ENCODE measurements at regions of chr1 and their contacts with region 1.

Region 1: DNA sequence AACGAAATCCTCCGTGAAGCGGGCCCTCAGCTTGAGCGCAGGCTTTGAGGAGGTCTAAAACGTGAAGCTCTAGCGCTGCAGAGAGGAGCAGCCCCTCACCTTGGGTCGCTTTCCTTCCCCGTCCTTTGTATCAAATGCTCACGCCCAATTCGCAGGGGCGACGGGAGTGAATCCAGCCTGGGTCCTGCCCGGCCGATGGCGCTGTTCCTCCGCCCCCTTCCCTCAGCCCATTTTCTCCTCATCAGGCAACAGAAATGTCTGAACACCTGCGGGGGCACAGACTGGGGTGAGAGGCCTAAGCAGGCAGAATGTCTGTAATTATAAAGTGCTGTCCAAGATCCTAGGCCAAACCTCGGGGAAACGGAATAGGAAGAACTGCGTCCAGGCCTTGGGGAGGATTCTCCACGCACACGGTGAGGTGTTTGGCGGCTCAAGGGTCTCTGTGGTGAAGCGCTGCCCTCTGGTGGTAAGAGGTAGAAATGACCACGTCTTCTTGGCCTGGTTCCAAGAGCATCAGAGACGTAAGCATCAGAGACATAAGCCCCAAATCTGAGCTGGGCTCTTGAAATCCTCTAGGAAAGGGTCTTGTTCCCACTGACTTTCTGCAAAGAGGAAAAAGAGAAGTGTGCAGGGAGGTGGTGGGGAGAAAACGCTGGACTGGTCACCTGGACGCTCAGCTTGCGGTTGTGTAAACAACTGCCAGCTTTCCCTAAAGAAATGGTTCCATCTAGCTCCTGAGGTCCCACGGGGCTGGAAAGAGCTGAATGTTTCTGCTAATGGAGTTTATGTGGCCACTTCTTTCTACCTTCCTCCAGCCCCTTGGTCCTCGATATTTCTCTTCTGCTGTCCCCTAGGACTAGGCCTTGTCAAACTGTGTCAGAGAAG is 92.1 kb upstream of the CD53 start:
- H3K4me3 ChIP-seq: no peak overlapping the region
- H3K27ac ChIP-seq: no peak overlapping the region
- H3K4me1 ChIP-seq: no peaks in the 10 kb centered on the region
- CTCF ChIP-seq: peak; percentile 64; the same call in 1 of the 2 replicates

Region 2: DNA sequence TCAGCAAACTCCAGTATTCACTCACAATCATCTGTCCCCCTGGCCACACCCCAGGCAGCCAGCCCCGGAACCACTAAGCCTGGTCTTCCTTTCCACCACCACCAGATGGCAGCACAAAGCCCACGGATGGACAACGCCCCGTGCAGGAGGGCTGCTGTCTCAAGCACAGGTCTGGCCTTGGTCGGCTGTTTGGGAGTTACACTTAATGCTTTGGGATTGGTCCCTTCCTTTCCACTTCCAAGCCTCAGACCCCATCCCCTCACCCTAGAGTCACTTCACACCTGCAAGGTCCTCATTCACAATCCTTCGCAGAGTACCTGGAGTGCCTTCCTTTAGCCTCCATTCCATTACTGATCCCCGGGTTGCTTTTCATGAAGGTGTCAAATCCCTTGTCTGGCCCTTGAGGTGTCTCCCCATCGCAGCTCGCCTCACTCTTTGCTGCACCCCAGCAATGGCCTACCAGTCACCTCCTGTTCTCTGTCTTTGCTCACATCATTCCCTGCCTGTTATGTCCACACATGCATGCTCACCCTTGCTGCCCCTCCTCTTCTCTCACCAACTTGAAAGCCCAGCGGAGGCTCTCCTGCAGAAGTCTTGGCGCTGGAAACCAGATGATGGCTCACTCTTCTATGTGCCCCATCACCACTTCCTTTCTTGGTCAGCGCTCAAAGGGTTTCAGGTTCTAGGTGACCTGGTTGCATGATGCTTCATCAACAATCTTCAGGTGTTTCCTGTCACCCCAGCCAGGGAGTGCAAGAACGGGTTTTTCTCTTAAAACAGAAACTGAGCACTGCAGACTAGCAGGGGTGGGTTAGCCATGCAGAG is 149.8 kb before region 1 on chr1:
- CTCF ChIA-PET with region 1: interaction called, 10 read pairs
- POLR2A ChIA-PET with region 1: no interaction called
- H3K4me3 ChIP-seq: no peak overlapping the region
- H3K27ac ChIP-seq: no peak overlapping the region
- H3K4me1 ChIP-seq: no peaks in the 10 kb centered on the region
- CTCF ChIP-seq: peak; percentile 75

Region 3: DNA sequence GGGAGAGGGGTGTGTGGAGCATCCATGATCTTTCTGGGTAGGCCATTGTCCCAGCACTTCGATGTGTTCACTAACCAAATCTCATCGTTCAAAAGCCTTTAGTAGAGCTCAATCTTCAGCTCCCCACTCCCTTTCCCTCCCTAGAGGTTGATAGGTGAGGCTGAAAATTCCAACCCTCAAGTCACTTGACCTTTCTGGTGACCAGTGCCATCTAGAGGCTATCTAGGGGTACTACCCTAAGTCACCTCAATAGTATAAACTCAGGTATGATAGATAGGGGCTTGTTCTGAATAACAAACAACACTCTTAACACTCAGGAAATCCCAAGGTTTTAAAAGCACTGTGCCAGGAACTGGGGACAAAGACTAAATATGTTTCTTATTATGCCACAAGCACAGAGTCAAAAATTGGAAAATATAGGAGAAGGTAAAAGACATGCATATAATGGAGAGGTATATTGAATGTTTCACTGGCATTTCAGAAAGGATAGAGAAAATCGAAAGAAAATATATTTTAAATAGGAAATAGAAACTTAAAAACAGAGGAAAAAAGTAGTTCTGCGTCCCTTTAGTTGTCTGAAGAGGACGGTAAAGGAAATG is 49.2 kb after region 1 on chr1:
- CTCF ChIA-PET with region 1: interaction called, 10 read pairs
- POLR2A ChIA-PET with region 1: no interaction called
- H3K4me3 ChIP-seq: no peak overlapping the region
- H3K27ac ChIP-seq: no peak overlapping the region
- H3K4me1 ChIP-seq: no peaks in the 10 kb centered on the region
- CTCF ChIP-seq: no peak

Measured in HEK293 (cell line).